Activated B cell treated with CpG ODN at 0.5 μM for 24 hours (primary cell): ENCODE measurements at regions of chr10 and their contacts with region 1.

Region 1: GRCh38 chr10:127906548-127907377 is at the start of gene PTPRE:
- DNase-seq: peak; percentile 71
- ATAC-seq: peak; percentile 98
- H3K4me3 Mint-ChIP-seq: peak within 1 kb of the TSS; percentile 29
- H3K27ac Mint-ChIP-seq: no peak within 1 kb of the TSS
- H3K4me1 Mint-ChIP-seq: no peaks in the 10 kb centered on the region
- H3K27me3 Mint-ChIP-seq: peaks cover 47% of the 10 kb centered on the region
- CTCF ChIP-seq: no peak
- total RNA-seq, gene PTPRE: 28.2 and 36.8 TPM in 2 replicates

Region 2: GRCh38 chr10:127715782-127716378 is 190.9 kb before region 1 on chr10:
- CTCF ChIA-PET with region 1: no interaction called
- POLR2A ChIA-PET with region 1: no interaction called
- intact Hi-C with region 1: loop called (anchors 1 kb)
- DNase-seq: no peak
- ATAC-seq: no peak
- H3K4me3 Mint-ChIP-seq: no peak overlapping the region
- H3K27ac Mint-ChIP-seq: no peak overlapping the region
- H3K4me1 Mint-ChIP-seq: no peaks in the 10 kb centered on the region
- H3K27me3 Mint-ChIP-seq: no peaks in the 10 kb centered on the region
- CTCF ChIP-seq: no peak

Region 3: GRCh38 chr10:127935071-127935561 is 28.4 kb after region 1 on chr10:
- CTCF ChIA-PET with region 1: no interaction called
- POLR2A ChIA-PET with region 1: no interaction called
- intact Hi-C with region 1: no loop called
- DNase-seq: no peak
- ATAC-seq: no peak
- H3K4me3 Mint-ChIP-seq: no peak overlapping the region
- H3K27ac Mint-ChIP-seq: no peak overlapping the region
- H3K4me1 Mint-ChIP-seq: no peaks in the 10 kb centered on the region
- H3K27me3 Mint-ChIP-seq: peaks cover 11% of the 10 kb centered on the region
- CTCF ChIP-seq: no peak

Region 4: DNA sequence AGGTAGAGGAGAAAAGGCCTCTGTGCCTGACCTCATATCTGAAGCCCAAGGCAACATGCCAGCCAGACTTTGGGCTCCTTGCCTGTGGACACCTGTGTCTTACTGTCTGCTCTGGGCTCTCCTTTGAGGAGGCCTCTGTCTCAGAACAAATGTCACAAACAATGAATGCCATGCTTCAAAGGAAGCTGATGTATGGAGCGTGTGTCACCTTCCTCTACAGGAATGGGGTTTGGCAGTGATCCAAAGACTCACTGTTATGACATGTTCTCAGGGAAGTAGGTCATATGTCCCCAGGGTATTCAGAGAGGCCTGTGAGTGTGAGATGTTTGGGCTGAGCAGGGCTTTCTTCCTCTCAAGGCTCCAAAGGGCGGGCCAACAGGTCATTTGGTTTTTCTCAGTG is 38.6 kb after region 1 on chr10:
- CTCF ChIA-PET with region 1: no interaction called
- POLR2A ChIA-PET with region 1: no interaction called
- intact Hi-C with region 1: no loop called
- DNase-seq: no peak
- ATAC-seq: peak; percentile 57
- H3K4me3 Mint-ChIP-seq: no peak overlapping the region
- H3K27ac Mint-ChIP-seq: no peak overlapping the region
- H3K4me1 Mint-ChIP-seq: peaks cover 9% of the 10 kb centered on the region
- H3K27me3 Mint-ChIP-seq: peaks cover 9% of the 10 kb centered on the region
- CTCF ChIP-seq: no peak